GM10248 (cell line): ENCODE measurements at regions of chr9 and their contacts with region 1.

Region 1: DNA sequence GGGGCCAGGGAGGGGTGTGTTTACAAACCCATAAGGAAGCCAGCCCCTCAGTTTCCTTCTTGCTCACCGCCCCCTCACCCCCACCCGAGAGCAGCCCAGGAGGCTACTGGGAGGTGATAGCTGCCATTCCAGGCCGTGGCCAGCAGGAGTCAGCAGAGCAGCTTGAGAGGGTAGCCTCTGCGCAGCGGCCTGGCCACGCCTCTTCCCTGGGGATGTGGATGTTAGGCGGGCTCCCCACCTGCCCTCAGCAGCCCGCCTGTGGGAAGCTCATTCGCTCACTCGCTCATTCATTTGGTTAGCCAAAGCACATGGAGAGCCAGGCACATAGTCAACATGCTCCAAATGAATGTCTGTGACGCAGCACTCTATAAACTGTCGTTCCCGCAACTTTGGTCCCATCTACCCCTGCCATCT is 6.1 kb upstream of the DPM2 start:
- DNase-seq: peak; percentile 86
- CTCF ChIP-seq: peak; percentile 90

Region 2: DNA sequence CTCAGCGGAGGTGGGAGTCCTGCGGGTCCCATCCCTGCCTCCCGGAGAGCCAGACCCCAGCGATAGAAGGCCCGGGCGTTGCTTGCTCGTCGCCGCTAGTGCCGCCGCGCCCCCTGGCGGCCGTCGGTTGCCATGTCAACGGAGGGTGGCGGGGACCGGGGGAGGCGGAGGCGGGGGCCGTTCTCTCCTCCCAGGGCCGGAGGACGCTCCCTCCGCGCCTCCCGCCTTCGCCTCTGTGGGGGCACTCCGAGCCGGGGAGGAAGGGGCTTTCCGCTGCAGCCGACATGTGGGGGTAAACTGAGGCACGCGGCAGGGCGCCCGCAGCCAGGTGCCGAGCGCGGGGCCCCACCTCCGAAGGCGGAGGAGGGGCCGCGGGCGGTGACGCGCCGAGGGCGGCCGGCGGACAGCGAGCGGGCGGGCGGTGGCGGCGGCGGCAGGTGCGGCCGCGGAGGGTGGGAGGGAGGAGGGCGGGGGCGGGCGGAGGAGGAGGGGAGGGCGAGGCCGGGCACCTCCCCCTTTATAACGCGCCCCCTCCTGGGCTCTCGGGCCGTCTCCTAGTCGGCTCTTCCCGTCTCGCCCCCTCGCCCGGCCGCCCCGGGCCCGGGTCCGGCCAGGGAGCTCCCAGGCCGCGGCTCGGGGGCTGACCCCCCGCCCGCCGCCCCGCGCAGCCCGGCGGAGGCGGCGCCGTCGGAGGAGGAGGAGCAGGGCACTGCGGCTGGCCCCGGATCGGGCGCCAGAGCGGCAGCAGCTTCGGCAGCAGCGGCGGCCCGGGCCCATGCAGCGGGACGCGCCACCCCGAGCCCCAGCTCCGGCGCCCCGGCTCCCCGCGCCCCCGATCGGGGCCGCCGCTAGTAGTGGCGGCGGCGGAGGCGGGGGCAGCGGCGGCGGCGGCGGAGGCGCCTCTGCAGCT is 158.5 kb before region 1 on chr9:
- CTCF ChIA-PET with region 1: no interaction called
- POLR2A ChIA-PET with region 1: no interaction called
- DNase-seq: peak; percentile 88
- CTCF ChIP-seq: peak; percentile 75

Region 3: DNA sequence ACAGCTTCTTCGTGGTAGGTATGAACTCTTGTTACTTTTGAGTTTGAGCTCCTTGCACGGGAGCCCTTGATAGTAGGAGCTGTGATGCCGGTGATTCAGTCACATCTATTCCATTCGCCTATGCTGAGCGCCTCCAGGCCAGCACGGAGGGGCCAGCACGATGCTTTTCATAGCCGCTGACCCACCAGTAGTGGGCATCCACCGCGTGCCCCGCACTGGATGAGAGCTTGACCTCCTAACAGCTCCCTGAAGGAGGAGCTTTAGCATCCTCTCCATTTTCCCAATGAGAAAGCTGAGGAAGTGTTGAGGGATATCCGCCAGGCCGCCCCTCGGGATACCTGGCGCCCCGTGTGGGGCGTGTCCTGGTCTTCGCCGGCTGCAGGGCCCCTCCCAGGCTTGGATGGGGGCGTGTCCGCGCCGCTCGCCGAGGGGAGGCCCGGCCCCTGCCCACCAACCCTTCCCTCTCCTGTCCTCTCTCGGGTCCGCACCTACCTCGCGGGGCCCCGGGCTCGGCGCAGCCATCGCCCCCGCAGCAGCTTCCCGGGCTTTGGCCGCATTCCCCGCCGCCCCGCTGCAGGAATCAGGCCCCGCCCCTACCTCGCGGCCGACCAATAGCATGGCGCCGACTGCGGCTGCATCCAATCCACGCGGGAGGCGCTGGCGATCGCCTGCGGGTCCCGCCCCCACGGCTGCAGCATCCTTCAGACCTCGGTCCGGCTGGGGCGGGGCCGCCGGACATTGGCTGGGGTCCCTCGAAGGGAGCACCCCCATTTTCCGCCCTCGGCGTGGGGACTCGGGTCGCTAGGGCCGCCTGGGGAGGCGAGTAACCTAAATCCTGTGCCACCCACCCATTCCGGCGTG is 13.3 kb before region 1 on chr9 and contains the start of gene PIP5KL1:
- CTCF ChIA-PET with region 1: interaction called, 48 read pairs
- POLR2A ChIA-PET with region 1: no interaction called
- DNase-seq: peak; percentile 95
- CTCF ChIP-seq: peak; percentile 10

Region 4: GRCh38 chr9:127955294-127956035 is 11.7 kb after region 1 on chr9:
- CTCF ChIA-PET with region 1: interaction called, 263 read pairs
- POLR2A ChIA-PET with region 1: no interaction called
- DNase-seq: peak; percentile 78
- CTCF ChIP-seq: peak; percentile 51

Region 5: DNA sequence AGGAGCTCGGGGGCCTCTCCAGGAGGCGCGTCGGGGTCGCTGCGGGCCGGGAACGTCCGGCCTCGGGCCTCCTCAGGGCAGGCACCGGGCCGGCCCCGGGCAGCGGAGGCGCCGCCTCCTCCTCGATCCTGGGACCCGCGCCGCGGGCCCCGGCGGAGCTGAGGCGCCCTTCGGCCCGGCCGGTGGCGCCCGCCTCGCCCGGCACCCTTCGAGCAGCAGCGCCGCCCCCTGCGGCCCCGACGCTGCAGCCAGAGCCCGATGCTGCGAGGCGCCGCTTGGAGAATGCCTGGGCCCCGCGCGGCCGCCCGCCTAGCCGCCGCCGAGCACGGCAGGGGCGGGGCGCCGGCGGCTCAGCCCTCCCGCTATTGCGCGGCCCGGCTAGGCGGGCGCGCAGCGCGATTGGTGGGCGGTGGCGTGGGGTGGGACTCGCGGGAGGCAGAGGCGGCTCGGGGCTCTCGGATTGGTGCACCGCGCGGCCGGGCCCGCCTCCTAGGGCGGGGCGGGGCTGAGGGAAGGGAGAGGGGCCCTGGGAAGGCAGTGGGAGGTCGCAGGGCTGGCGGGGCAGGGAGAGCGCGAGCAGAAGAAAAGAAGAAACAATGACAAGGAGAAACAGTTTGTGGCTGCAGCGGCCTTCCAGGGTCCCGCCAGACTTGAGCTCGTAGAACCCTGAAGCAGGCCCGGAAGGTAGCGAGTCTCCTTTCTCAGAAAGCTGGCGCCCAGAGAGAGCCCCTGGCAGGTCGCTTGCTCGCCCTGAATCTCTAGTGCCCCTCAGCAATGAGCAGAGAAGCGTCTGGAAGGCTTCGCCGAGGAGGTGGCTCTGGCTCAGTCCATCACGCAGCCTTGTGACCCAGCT is 37.2 kb after region 1 on chr9 and contains the start of gene EEIG1:
- CTCF ChIA-PET with region 1: interaction called, 34 read pairs
- POLR2A ChIA-PET with region 1: interaction called, 4 read pairs
- DNase-seq: peak; percentile 97
- CTCF ChIP-seq: no peak

Region 6: GRCh38 chr9:128001779-128002298 is 58.1 kb after region 1 on chr9:
- CTCF ChIA-PET with region 1: interaction called, 12 read pairs
- POLR2A ChIA-PET with region 1: no interaction called
- DNase-seq: no peak
- CTCF ChIP-seq: no peak

Region 7: GRCh38 chr9:128067876-128068613 is 124.3 kb after region 1 on chr9 and contains the start of gene SLC25A25:
- CTCF ChIA-PET with region 1: interaction called, 33 read pairs
- POLR2A ChIA-PET with region 1: no interaction called
- DNase-seq: peak; percentile 98
- CTCF ChIP-seq: no peak

Region 8: DNA sequence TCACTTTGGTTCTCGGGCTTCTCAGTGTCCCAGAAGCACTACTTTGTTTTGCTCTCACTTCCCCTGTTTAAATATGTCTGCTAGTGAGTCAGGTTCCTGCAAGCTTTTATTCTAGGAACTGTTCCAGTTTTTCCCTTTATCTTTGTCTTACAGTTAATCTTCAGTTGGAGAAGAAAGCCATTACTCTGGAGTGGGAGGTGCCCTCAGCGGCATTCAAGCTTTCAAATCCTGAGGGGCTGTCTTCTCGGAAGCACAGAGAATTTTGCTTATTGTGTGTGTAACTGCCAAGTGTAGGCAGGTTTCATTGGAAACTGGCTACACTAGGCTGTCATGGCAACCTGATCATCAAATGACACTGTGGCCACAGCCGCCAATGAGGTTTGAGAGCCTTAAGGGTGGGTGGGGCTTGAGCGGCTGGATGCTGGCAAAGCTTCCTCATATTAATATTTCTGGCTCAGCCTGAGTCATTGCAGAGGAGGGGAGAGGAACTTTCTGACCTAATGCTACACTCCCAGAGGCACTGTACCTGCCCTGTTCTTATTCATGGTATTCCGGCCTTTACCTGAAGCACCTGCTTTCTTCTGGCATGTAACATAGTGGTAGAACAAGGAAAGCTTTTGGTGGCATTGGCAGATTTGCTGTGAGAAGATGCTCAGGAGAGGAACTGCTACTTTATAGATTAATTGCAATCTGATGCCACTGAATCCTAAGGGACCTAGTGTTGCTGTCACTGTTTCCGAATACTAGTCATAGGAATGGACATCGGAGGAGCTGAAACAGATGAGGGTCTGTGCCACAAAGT is 150.6 kb after region 1 on chr9:
- CTCF ChIA-PET with region 1: interaction called, 13 read pairs
- POLR2A ChIA-PET with region 1: no interaction called
- DNase-seq: peak; percentile 91
- CTCF ChIP-seq: no peak